Activated B cell treated with CpG ODN at 0.5 μM for 24 hours (primary cell): ENCODE measurements at regions of chr15 and their contacts with region 1.

Region 1: DNA sequence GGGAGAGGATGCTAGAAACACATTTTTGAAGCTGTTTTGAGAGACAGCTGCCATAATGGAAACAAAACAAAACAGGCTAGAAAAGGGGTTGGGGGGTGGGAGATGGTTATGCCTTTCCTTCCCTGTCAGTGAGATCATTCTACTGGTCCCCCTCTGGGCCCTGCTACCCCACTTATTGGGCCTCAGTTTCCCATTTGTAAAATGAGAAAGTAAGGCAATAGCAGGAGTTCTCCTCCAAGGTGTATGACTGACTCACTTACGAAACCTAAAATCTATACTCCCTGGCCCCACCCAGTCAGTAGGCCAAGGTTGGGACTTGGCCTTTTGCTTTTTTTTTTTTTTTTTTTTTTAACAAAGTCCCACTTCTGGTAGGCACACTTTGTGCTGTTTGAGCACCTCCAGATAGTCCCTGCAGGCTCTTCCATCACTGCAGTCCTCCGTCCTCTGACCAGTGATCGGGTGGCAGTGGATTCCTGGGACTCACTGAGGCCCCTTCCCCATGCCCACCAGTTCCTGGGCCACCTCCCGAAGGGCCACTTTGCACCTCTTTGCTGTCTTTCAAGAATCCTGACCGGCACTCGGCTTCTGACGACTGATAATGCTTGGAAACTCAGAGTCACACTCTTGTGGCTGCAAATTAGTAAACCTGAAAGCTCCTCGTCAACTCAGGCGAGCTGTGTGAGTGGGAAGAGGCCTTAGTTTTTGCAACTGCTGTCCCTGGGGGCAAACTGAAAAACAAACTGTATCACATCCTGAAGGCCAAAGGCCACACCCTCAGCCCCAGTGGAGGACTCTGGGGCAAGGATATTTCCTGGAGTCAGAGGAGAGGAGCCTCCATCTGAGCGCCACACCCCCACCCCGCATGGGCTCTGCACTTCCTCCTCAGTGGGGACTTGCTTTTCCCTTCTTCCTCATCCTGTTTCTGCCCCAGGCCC is 6.7 kb upstream of the PSTPIP1 start:
- DNase-seq: no peak
- ATAC-seq: peak; percentile 94
- H3K4me3 Mint-ChIP-seq: peak overlapping the region; percentile 41
- H3K27ac Mint-ChIP-seq: peak overlapping the region; percentile 77
- H3K4me1 Mint-ChIP-seq: peaks cover 21% of the 10 kb centered on the region
- H3K27me3 Mint-ChIP-seq: no peaks in the 10 kb centered on the region
- CTCF ChIP-seq: no peak

Region 2: GRCh38 chr15:76223521-76223920 is 764.7 kb before region 1 on chr15:
- CTCF ChIA-PET with region 1: no interaction called
- POLR2A ChIA-PET with region 1: no interaction called
- intact Hi-C with region 1: no loop called
- DNase-seq: no peak
- ATAC-seq: no peak
- H3K4me3 Mint-ChIP-seq: no peak overlapping the region
- H3K27ac Mint-ChIP-seq: no peak overlapping the region
- H3K4me1 Mint-ChIP-seq: no peaks in the 10 kb centered on the region
- H3K27me3 Mint-ChIP-seq: no peaks in the 10 kb centered on the region
- CTCF ChIP-seq: no peak

Region 3: GRCh38 chr15:77002954-77003912 is 15.0 kb after region 1 on chr15:
- CTCF ChIA-PET with region 1: no interaction called
- POLR2A ChIA-PET with region 1: interaction called, 3 read pairs
- intact Hi-C with region 1: loop called (anchors 2 kb)
- DNase-seq: no peak
- ATAC-seq: peak; percentile 89
- H3K4me3 Mint-ChIP-seq: peak overlapping the region; percentile 73
- H3K27ac Mint-ChIP-seq: peak overlapping the region; percentile 81
- H3K4me1 Mint-ChIP-seq: peaks cover 53% of the 10 kb centered on the region
- H3K27me3 Mint-ChIP-seq: no peaks in the 10 kb centered on the region
- CTCF ChIP-seq: no peak